ENCODE measurements at regions of chr1 and their contacts with region 1.

Region 1: DNA sequence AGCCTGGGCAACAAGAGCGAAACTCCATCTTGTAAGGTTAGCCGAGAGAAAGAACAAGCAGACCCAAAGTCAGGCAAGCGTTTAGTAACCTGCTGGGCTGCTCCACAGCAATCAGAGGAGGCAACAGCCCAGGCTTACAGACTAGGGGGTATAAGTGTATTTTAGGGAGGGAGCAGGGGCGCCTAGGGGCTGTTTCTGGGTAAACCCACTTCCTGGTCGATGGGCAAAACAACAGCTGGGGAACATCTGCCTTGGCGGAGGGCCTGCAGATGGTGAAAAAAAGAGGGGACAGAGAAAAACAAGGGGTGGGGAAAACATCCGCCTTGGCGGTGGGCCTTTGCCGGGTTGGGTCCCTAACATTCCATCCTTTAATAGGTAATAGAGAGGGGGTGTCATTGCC is 5.2 kb downstream of the TAS1R1 start:
- DNase-seq: no peak
- H3K4me3 ChIP-seq: no peak overlapping the region
- H3K27ac ChIP-seq: no peak overlapping the region
- H3K4me1 ChIP-seq: peaks cover 0 to 1% (median 0%) of the 10 kb centered on the region in 4 experiments; a peak in 1 of 7 replicates
- H3K27me3 ChIP-seq: no peaks in the 10 kb centered on the region; a peak in 3 of 7 replicates
- CTCF ChIP-seq: no peak
- EP300 ChIP-seq: no peak
- POLR2A ChIP-seq: no peak
- RAD21 ChIP-seq: no peak

Region 2: GRCh38 chr1:6574025-6574620 is 13.9 kb after region 1 on chr1:
- CTCF ChIA-PET with region 1: interaction called, 23 read pairs
- POLR2A ChIA-PET with region 1: interaction called, 6 read pairs
- DNase-seq: no peak
- H3K4me3 ChIP-seq: no peak overlapping the region
- H3K27ac ChIP-seq: no peak overlapping the region
- H3K4me1 ChIP-seq: peaks cover 0 to 9% (median 6%) of the 10 kb centered on the region in 4 experiments; a peak in 6 of 7 replicates
- H3K27me3 ChIP-seq: peaks cover 0 to 2% (median 0%) of the 10 kb centered on the region in 4 experiments; a peak in 3 of 7 replicates
- CTCF ChIP-seq: no peak
- EP300 ChIP-seq: no peak
- POLR2A ChIP-seq: no peak
- RAD21 ChIP-seq: no peak